ENCODE measurements at regions of chr12 and their contacts with region 1.

Region 1: GRCh38 chr12:14618983-14619382 is 51.3 kb upstream of the PLBD1 start:
- DNase-seq: peak in 3 of 9 donors; percentile 3 to 19 (median 10)
- ATAC-seq: no peak
- H3K4me3 ChIP-seq: no peak overlapping the region
- H3K4me3 Mint-ChIP-seq: peak overlapping the region in 1 of 10 donors; percentile 19
- H3K27ac ChIP-seq: no peak overlapping the region
- H3K27ac Mint-ChIP-seq: no peak overlapping the region
- H3K4me1 ChIP-seq: no peaks in the 10 kb centered on the region
- H3K4me1 Mint-ChIP-seq: peaks cover 0 to 4% (median 0%) of the 10 kb centered on the region in 7 donors
- H3K27me3 ChIP-seq: no peaks in the 10 kb centered on the region
- H3K27me3 Mint-ChIP-seq: peaks cover 2 to 22% (median 21%) of the 10 kb centered on the region in 5 donors

Region 2: GRCh38 chr12:13061421-13062128 is 1557.4 kb before region 1 on chr12:
- CTCF ChIA-PET with region 1: no interaction called
- POLR2A ChIA-PET with region 1: no interaction called
- intact Hi-C with region 1: no loop called
- DNase-seq: no peak
- ATAC-seq: no peak
- H3K4me3 ChIP-seq: no peak overlapping the region
- H3K4me3 Mint-ChIP-seq: no peak overlapping the region
- H3K27ac ChIP-seq: no peak overlapping the region
- H3K27ac Mint-ChIP-seq: no peak overlapping the region
- H3K4me1 ChIP-seq: no peaks in the 10 kb centered on the region
- H3K4me1 Mint-ChIP-seq: no peaks in the 10 kb centered on the region
- H3K27me3 ChIP-seq: no peaks in the 10 kb centered on the region
- H3K27me3 Mint-ChIP-seq: no peaks in the 10 kb centered on the region

Region 3: GRCh38 chr12:14322403-14322802 is 296.6 kb before region 1 on chr12:
- CTCF ChIA-PET with region 1: interaction called, 10 read pairs
- POLR2A ChIA-PET with region 1: no interaction called
- intact Hi-C with region 1: no loop called
- DNase-seq: no peak
- ATAC-seq: no peak
- H3K4me3 ChIP-seq: no peak overlapping the region
- H3K4me3 Mint-ChIP-seq: no peak overlapping the region
- H3K27ac ChIP-seq: no peak overlapping the region
- H3K27ac Mint-ChIP-seq: no peak overlapping the region
- H3K4me1 ChIP-seq: no peaks in the 10 kb centered on the region
- H3K4me1 Mint-ChIP-seq: peaks cover 0 to 3% (median 0%) of the 10 kb centered on the region in 7 donors
- H3K27me3 ChIP-seq: no peaks in the 10 kb centered on the region
- H3K27me3 Mint-ChIP-seq: peaks cover 0 to 5% (median 0%) of the 10 kb centered on the region in 5 donors

Region 4: GRCh38 chr12:14521822-14522221 is 97.2 kb before region 1 on chr12:
- CTCF ChIA-PET with region 1: no interaction called
- POLR2A ChIA-PET with region 1: no interaction called
- intact Hi-C with region 1: no loop called
- DNase-seq: no peak
- ATAC-seq: no peak
- H3K4me3 ChIP-seq: no peak overlapping the region
- H3K4me3 Mint-ChIP-seq: no peak overlapping the region
- H3K27ac ChIP-seq: no peak overlapping the region
- H3K27ac Mint-ChIP-seq: no peak overlapping the region
- H3K4me1 ChIP-seq: no peaks in the 10 kb centered on the region
- H3K4me1 Mint-ChIP-seq: no peaks in the 10 kb centered on the region
- H3K27me3 ChIP-seq: no peaks in the 10 kb centered on the region
- H3K27me3 Mint-ChIP-seq: peaks cover 0 to 17% (median 6%) of the 10 kb centered on the region in 5 donors

Measured in naive thymus-derived CD4-positive, alpha-beta T cell (primary cell).